GM12878 (cell line): ENCODE measurements at regions of chrX and their contacts with region 1.

Region 1: DNA sequence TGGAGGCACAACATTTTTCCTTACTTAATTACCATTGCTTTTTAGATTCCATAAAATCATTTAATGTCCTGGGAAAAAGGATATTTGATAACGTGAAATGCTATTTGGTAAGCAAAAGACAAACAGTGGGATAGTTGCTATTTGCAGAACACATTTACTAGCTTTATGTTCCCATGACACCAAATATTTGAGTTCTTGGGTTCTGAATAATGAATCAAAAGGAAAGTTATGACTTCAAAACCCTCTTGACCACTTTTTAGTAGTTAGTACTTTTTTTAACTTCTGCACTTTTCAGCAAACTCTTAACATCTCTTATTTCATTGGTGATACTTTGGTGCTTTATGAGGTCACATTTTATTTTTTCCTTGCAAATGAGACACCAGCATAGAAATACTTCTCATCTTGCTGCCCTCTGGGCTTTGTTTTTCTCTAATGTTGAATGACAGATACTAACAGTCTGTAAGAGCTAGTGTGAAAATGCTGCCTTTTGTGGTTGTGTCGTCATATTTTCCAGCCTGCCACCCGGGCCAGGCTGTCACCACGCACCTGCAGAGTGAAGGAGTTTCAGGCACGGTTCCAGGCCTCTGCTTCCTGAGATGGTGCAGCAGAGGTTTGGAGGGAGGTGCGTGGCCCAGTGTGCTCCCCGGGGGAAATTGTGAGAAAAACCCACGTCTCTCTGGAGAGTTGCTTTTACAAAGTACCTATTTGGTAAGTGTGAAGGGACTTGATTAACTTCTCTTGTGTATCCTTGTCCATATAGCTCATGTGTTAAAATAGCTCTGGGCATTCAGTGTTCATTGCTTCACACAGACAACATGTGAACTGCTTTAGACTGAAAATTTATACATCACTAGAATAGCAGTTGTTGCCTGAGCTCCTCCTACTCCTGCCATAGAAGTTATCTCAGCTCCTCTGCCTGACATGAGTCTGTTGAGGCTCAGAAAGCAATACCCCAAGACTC is 34.7 kb downstream of the MSL3 start:
- DNase-seq: peak; percentile 86
- ATAC-seq: peak; percentile 87
- H3K4me3 ChIP-seq: peak overlapping the region; percentile 37; the same call in 1 of the 2 replicates
- H3K27ac ChIP-seq: peak overlapping the region; percentile 61
- H3K4me1 ChIP-seq: peaks cover 31% of the 10 kb centered on the region
- H3K27me3 ChIP-seq: no peaks in the 10 kb centered on the region
- CTCF ChIP-seq: no peak
- EP300 ChIP-seq: peak; percentile 86 to 96
- POLR2A ChIP-seq: 0 out of 2 replicates have a peak, but pooled peaks have one; percentile 27
- RAD21 ChIP-seq: 0 out of 2 replicates have a peak, but pooled peaks have one; percentile 4

Region 2: GRCh38 chrX:11540532-11541377 is 252.0 kb before region 1 on chrX:
- CTCF ChIA-PET with region 1: interaction called, 12 read pairs
- POLR2A ChIA-PET with region 1: no interaction called
- RAD21 ChIA-PET with region 1: interaction called, 8 read pairs
- SMC1A ChIA-PET with region 1: interaction called, 13 read pairs
- in situ Hi-C with region 1: no loop called
- intact Hi-C with region 1: no loop called
- DNase-seq: peak; percentile 34
- ATAC-seq: peak; percentile 90
- H3K4me3 ChIP-seq: no peak overlapping the region
- H3K27ac ChIP-seq: no peak overlapping the region
- H3K4me1 ChIP-seq: no peaks in the 10 kb centered on the region
- H3K27me3 ChIP-seq: no peaks in the 10 kb centered on the region
- CTCF ChIP-seq: peak; percentile 9 to 49 (median 25); a peak in 4 of 6 replicates
- EP300 ChIP-seq: peak in 1 of 2 experiments; percentile 48; a peak in 1 of 4 replicates
- POLR2A ChIP-seq: no peak
- RAD21 ChIP-seq: peak; percentile 45

Region 3: GRCh38 chrX:11739776-11740175 is 53.0 kb before region 1 on chrX:
- CTCF ChIA-PET with region 1: interaction called, 11 read pairs
- POLR2A ChIA-PET with region 1: interaction called, 9 read pairs
- RAD21 ChIA-PET with region 1: interaction called, 41 read pairs
- SMC1A ChIA-PET with region 1: interaction called, 28 read pairs
- in situ Hi-C with region 1: no loop called
- intact Hi-C with region 1: loop called (anchors 1 kb)
- DNase-seq: peak; percentile 66
- ATAC-seq: peak; percentile 64
- H3K4me3 ChIP-seq: no peak overlapping the region
- H3K27ac ChIP-seq: peak overlapping the region; percentile 73
- H3K4me1 ChIP-seq: peaks cover 17% of the 10 kb centered on the region; the same call in 1 of the 2 replicates
- H3K27me3 ChIP-seq: no peaks in the 10 kb centered on the region
- CTCF ChIP-seq: no peak
- EP300 ChIP-seq: peak; percentile 85 to 92
- POLR2A ChIP-seq: no peak
- RAD21 ChIP-seq: no peak

Region 4: DNA sequence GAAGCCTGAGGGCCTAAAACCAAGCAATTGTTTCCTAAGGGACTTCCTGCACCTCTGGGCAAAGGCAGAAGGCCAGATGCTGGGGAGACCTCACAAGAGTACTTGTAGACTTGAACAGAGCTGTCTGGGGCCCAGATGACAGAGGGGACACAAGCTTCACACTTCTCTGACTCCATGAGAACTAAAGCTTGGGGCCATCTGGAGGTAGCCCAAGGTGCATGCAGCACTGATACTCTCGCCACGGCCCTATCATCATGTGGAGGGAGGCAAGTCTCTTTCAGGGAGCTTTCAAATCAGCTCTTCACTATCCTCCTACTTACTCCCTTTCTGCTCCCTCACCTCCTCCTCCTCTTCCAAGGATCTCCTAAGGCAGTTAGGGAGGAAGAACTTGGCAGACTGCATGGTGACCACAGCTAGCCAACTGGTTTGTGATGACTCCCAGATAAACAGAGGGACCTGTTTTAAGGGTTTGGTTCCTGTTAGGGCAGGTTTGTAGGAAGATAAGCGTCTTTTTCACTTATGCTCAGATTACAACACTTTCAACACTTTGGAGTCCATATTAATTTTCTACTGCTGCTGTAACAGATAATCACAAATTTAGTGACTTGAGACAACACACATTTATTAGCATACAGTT is 10.9 kb before region 1 on chrX:
- CTCF ChIA-PET with region 1: interaction called, 226 read pairs
- POLR2A ChIA-PET with region 1: interaction called, 8 read pairs
- RAD21 ChIA-PET with region 1: interaction called, 17 read pairs
- SMC1A ChIA-PET with region 1: interaction called, 404 read pairs
- in situ Hi-C with region 1: no loop called
- intact Hi-C with region 1: no loop called
- DNase-seq: no peak
- ATAC-seq: peak; percentile 42
- H3K4me3 ChIP-seq: no peak overlapping the region
- H3K27ac ChIP-seq: no peak overlapping the region
- H3K4me1 ChIP-seq: no peaks in the 10 kb centered on the region
- H3K27me3 ChIP-seq: no peaks in the 10 kb centered on the region
- CTCF ChIP-seq: no peak
- EP300 ChIP-seq: no peak
- POLR2A ChIP-seq: no peak
- RAD21 ChIP-seq: no peak

Region 5: DNA sequence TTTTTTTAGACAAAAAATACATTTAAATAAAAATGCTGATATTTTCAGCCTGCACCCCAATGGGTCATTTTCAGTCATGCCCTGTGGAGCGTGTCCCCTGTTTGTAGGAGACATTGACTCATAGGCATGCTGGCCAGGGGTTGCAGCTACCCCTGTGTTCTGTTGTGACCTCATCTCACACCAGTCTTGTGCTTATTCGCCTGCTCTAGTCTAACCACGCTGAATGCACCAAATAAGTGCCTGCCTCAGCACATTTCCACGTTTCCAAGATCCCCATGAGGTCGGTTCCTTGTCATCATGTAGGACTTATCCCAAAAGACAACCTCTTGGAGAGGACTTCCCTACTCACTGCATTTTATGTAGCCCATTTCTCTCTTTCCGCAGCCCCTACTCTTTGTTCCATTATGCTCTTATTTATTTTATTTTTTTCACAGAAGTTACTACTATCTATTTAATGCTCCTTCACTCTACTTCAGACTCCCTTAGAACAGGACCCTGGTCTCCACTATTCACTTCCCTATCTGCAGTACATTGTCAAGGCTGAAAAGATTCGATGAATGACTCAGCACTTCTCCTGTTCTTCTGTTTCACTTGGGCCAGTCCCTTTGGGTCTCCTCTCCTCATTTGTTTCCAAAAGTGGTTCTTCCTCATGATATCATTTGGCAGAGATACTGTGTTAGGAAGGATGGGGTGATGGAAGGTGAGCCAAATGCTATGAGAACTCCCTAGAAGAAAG is 75.0 kb after region 1 on chrX:
- CTCF ChIA-PET with region 1: interaction called, 3 read pairs
- POLR2A ChIA-PET with region 1: interaction called, 6 read pairs
- RAD21 ChIA-PET with region 1: interaction called, 10 read pairs
- SMC1A ChIA-PET with region 1: interaction called, 4 read pairs
- in situ Hi-C with region 1: no loop called
- intact Hi-C with region 1: no loop called
- DNase-seq: no peak
- ATAC-seq: peak; percentile 81
- H3K4me3 ChIP-seq: no peak overlapping the region
- H3K27ac ChIP-seq: no peak overlapping the region
- H3K4me1 ChIP-seq: no peaks in the 10 kb centered on the region
- H3K27me3 ChIP-seq: no peaks in the 10 kb centered on the region
- CTCF ChIP-seq: no peak
- EP300 ChIP-seq: no peak
- POLR2A ChIP-seq: no peak
- RAD21 ChIP-seq: no peak